Activated CD4-positive, alpha-beta T cell treated with anti-CD3 and anti-CD28 coated beads, Interleukin-2, amount 10 ng/mL, durations not matched to agents 24 days and 14 days (primary cell): ENCODE measurements at regions of chr18 and their contacts with region 1.

Region 1: DNA sequence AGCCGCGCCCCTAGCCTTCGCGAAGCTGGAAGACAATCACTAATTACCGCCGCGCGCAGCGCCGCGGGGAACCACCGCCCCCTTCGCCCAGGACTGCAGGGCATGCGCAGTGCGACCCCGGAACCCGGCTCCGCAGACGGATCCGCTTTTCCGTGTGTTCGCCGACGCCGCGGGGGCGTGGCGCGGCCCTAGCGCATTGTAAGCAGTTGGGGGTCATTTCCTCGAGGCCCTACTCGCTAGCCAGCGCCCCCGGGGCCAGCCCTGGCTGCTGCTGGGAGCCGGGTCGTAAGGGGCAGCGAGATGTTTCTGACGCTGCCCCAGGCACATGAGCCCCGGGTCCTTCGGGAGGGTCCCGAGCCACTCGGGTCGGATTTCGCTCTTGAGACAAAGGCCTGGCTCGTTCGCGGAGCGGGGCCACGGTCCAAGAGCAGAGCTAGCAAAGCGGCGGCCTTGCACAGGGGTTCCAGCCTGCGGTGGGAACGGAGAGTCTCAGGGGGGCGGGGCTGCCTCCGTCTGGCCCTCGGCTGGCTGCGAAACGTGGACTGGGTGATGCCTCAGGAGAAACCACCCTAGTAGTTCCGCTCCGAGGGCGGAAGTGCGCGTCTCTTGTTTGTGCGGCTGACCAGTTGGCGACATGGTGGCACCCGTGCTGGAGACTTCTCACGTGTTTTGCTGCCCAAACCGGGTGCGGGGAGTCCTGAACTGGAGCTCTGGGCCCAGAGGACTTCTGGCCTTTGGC is at the starts of genes ELP2 and SLC39A6:
- DNase-seq: peak; percentile 99
- H3K4me3 Mint-ChIP-seq: peak within 1 kb of the TSS; percentile 94
- H3K27ac Mint-ChIP-seq: peak within 1 kb of the TSS; percentile 96
- H3K4me1 Mint-ChIP-seq: peaks cover 50% of the 10 kb centered on the region
- H3K27me3 Mint-ChIP-seq: no peaks in the 10 kb centered on the region
- total RNA-seq, gene ELP2: 104 and 111 TPM in 2 replicates
- total RNA-seq, gene SLC39A6: 51.2 and 51.5 TPM in 2 replicates

Region 2: GRCh38 chr18:35983818-35984217 is 145.7 kb before region 1 on chr18:
- intact Hi-C with region 1: no loop called
- DNase-seq: no peak
- H3K4me3 Mint-ChIP-seq: no peak overlapping the region
- H3K27ac Mint-ChIP-seq: no peak overlapping the region
- H3K4me1 Mint-ChIP-seq: no peaks in the 10 kb centered on the region
- H3K27me3 Mint-ChIP-seq: no peaks in the 10 kb centered on the region

Region 3: GRCh38 chr18:36067055-36067957 is 62.2 kb before region 1 on chr18 and contains the start of gene RPRD1A:
- intact Hi-C with region 1: loop called (anchors 1 kb)
- DNase-seq: peak; percentile 99
- H3K4me3 Mint-ChIP-seq: peak within 1 kb of the TSS; percentile 95
- H3K27ac Mint-ChIP-seq: peak within 1 kb of the TSS; percentile 97
- H3K4me1 Mint-ChIP-seq: peaks cover 28% of the 10 kb centered on the region
- H3K27me3 Mint-ChIP-seq: peaks cover 7% of the 10 kb centered on the region
- total RNA-seq, gene RPRD1A: 24.6 and 27.4 TPM in 2 replicates

Region 4: GRCh38 chr18:36142751-36143150 is 13.3 kb after region 1 on chr18:
- intact Hi-C with region 1: loop called (anchors 2 kb)
- DNase-seq: no peak
- H3K4me3 Mint-ChIP-seq: no peak overlapping the region
- H3K27ac Mint-ChIP-seq: no peak overlapping the region
- H3K4me1 Mint-ChIP-seq: peaks cover 7% of the 10 kb centered on the region
- H3K27me3 Mint-ChIP-seq: no peaks in the 10 kb centered on the region

Region 5: DNA sequence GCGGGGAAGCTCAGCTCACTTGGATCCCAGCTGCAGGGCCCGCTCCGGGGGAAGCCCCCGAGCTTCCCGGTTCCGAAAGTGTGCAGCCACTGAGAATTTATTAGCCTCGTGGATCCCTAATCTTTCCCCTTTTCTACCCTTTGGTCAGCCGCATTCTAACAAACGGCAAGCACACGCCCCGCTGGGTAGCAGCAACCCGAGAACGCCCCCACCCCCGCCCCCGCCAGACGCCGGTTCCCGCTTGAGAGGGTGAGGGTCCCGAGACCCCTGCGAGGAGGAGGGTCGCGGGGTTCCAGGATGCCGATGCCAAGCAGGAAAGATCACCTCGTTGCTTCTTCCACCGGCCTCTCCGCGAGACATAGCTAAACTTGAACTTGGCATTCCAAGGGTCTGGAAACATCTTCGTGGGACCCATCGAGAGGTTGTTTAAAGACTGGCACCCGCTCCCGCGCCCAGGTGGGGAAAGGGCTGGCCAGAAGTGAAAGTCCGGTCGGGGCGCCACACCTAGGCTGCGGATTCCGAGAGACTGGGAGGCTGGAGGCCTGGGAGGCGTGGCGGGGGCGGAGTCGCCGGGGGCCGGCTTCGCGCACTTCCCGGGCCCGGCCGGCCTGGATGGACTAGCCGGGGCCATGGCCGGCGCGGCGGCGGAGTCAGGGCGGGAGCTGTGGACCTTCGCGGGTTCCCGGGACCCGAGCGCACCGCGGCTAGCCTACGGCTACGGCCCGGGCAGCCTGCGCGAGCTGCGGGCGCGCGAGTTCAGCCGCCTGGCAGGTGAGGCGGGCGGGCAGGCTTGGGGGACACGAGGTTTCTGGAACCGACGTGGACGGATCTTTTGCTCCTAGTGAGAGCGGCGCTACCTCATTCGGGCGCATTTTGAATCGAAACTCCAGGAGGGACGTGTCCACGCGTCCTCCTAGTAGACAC is 57.7 kb after region 1 on chr18 and contains the start of gene MOCOS:
- intact Hi-C with region 1: loop called (anchors 2 kb)
- DNase-seq: peak; percentile 89
- H3K4me3 Mint-ChIP-seq: peak within 1 kb of the TSS; percentile 82
- H3K27ac Mint-ChIP-seq: no peak within 1 kb of the TSS
- H3K4me1 Mint-ChIP-seq: peaks cover 5% of the 10 kb centered on the region
- H3K27me3 Mint-ChIP-seq: peaks cover 31% of the 10 kb centered on the region
- total RNA-seq, gene MOCOS: 0.21 and 0.57 TPM in 2 replicates

Region 6: DNA sequence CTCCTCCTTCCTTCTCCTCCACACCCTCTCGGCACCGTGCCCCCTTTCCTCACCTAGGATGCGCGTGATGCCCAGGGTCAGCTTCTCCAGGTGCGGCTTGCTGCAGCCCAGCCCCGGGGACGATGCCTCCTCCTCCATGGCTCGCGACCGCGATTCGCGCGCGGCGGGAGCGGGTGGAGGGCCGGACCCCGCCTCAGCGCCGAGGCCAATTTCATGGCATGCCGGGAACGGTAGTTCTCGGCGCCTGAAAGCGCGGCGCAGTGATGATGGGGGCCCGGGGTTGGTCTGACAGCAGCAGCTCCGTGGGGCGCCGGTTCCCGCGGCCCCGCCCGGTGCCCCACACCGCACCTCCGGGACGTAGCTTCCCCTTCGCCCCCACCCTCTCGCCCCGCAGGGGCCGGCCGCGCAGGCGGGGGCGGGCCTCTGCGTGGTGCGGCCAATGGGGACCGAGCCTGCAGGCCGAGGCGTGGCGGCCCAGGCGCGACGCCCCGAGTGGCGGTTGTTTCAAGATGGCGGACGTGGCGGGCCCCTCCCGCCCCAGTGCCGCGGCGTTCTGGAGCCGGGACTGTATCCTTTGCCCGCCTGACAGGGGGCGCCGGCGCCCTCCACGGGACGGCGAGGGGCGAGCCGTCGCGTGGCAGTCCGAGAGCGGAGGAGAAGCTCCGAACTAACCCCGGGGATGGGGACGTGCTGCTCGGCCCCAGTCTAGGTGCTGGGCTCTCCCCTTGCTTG is 699.3 kb after region 1 on chr18 and contains the starts of genes KIAA1328 and TPGS2:
- intact Hi-C with region 1: loop called (anchors 1 kb)
- DNase-seq: peak; percentile 97
- H3K4me3 Mint-ChIP-seq: peak within 1 kb of the TSS; percentile 83
- H3K27ac Mint-ChIP-seq: peak within 1 kb of the TSS; percentile 98
- H3K4me1 Mint-ChIP-seq: peaks cover 45% of the 10 kb centered on the region
- H3K27me3 Mint-ChIP-seq: no peaks in the 10 kb centered on the region
- total RNA-seq, gene KIAA1328: 7.3 and 7.6 TPM in 2 replicates
- total RNA-seq, gene TPGS2: 76.9 and 77.5 TPM in 2 replicates